ENCODE measurements at regions of chr2 and their contacts with region 1.

Region 1: DNA sequence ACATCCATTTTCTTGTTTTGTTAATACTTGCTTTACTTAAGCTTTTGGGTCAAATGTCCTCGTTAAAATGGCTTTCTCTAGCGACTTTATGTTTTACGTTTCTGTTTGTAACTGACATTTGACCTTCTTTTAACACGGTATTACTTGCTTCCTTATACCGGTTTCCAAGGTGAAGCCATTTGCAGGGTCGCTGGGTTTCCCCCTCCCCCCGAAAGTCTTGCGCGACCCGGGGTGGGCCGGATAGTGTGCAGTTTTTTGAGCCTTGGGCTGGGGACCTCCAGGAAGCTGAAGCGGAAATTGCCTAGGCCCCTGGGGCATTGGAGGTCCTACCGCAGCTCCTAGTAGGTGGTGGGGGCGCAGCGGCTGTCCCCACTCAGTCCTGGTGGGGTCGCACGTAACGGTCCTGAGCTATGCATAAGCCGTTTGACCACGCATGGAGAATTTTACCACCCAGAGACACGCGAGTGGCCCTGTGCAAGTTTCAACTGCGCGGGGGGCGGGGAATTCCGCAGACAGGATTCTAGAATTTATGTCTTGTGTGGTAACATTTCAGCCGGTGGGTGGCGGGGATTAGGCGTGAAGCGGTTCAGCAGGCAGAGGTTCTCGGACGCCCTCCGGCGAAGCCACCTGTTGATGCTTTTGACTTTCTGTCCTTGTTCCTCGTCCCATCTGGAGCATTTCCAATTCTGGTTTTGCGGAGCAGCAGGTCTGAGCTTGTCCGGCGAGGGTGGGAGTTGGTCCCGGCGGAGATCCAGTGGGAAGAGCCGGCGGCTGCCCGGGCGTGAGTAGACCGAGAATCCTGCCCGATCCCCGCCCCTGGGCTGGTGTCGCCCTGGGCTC is 2.4 kb downstream of the CFLAR start:
- DNase-seq: peak; percentile 59
- H3K4me3 ChIP-seq: peak overlapping the region; percentile 66 to 97 (median 82)
- H3K27ac ChIP-seq: peak overlapping the region; percentile 97 to 100 (median 99)
- H3K4me1 ChIP-seq: peaks cover 7 to 79% (median 27%) of the 10 kb centered on the region in 3 donors
- H3K27me3 ChIP-seq: no peaks in the 10 kb centered on the region
- CTCF ChIP-seq: peak in 5 of 6 experiments; percentile 15 to 45 (median 41)
- POLR2A ChIP-seq: peak in 2 of 4 donors; percentile 70 to 79

Region 2: DNA sequence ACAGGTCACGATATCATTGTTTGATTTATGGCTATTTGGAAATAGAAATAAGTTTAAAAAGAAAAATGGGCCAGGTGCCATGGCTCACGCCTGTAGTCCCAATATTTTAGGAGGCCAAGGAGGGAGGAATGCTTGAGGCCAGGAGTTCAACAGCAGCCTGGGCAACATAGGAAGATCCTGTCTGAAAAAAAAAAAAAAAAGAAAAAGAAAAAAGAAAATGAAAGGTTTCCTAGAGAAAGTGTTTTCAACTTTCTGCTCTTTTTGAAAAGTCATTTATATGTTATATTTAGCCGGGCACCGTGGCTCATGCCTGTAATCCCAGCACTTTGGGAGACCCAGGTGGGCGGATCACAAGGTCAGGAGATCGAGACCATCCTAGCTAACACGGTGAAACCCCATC is 43.3 kb before region 1 on chr2:
- intact Hi-C with region 1: loop called (anchors 5 kb)
- DNase-seq: no peak
- H3K4me3 ChIP-seq: no peak overlapping the region
- H3K27ac ChIP-seq: no peak overlapping the region
- H3K4me1 ChIP-seq: peaks cover 16 to 48% (median 22%) of the 10 kb centered on the region in 3 donors
- H3K27me3 ChIP-seq: no peaks in the 10 kb centered on the region
- CTCF ChIP-seq: no peak
- POLR2A ChIP-seq: no peak

Region 3: DNA sequence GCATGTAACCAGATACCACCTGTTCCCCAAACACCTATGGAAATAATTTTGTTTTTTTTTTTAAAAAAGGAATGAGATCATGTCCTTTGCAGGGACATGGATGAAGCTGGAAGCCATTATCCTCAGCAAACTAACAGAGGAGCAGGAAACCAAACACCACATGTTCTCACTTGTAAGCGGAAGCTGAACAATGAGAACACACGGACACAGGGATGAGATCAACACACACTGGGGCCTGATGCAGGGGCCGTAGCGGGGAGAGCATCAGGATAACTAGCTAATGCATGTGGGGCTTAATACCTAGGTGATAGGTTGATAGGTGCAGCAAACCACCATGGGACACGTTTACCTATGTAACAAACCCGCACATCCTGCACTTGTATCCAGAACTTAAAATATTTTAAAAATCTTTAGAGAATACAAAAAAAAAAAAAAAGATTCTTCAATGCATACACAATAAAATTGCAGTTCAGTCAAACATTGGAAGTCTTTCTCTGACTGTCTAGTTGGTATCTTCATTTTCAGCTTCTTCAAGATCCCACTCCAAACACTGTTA is 53.0 kb after region 1 on chr2:
- intact Hi-C with region 1: loop called (anchors 10 kb)
- DNase-seq: no peak
- H3K4me3 ChIP-seq: no peak overlapping the region
- H3K27ac ChIP-seq: no peak overlapping the region
- H3K4me1 ChIP-seq: peaks cover 0 to 14% (median 3%) of the 10 kb centered on the region in 3 donors
- H3K27me3 ChIP-seq: no peaks in the 10 kb centered on the region
- CTCF ChIP-seq: no peak
- POLR2A ChIP-seq: no peak